ENCODE measurements at regions of chr6 and their contacts with region 1.

Region 1: DNA sequence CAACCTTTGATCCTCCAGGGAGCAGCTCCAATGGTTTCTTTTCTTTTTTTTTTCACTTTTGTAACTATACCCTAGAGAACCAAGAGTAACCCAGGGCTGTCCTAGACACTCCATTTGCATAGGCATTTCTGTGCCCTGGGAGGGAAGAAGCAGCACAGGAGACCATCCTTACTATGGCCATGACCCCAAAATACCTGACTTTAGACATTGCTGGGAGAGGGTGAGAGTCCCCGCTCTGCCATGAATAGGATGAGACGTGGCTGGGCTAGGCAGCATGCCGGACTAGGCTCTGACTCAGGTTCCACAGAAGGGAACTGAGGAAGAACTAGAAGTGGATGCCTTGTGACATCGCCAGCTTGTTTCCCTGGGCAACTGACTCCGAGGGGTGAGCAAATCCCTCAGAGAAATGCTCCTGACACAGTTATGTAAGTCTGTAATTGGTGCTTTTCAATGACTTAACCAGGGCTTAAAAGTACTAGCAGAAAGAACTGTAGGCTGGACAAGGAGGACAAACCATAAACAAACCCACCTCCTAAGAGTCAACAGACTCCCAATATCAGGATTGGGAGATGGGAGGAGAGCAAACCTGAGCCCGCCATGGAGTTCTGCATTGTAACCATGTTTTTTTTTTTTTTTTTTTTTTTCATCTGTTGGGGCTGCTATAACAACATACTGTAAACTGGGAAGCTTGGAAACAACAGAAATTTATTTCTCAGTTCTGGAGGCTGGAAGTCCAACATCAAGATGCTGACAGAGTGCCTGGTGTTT is 910 bp upstream of the ADTRP start:
- DNase-seq: no peak
- ATAC-seq: no peak
- H3K4me3 Mint-ChIP-seq: no peak overlapping the region
- H3K27ac Mint-ChIP-seq: no peak overlapping the region
- H3K4me1 Mint-ChIP-seq: peaks cover 0 to 5% (median 3%) of the 10 kb centered on the region in 4 donors
- H3K27me3 Mint-ChIP-seq: no peaks in the 10 kb centered on the region

Region 2: GRCh38 chr6:11766589-11767450 is 12.7 kb before region 1 on chr6:
- POLR2A ChIA-PET with region 1: interaction called, 16 read pairs
- DNase-seq: no peak
- ATAC-seq: no peak
- H3K4me3 Mint-ChIP-seq: no peak overlapping the region
- H3K27ac Mint-ChIP-seq: no peak overlapping the region
- H3K4me1 Mint-ChIP-seq: peaks cover 5 to 14% (median 10%) of the 10 kb centered on the region in 4 donors
- H3K27me3 Mint-ChIP-seq: peaks cover 0 to 3% (median 0%) of the 10 kb centered on the region in 5 donors